Right ventricle myocardium inferior (tissue), 1 donor: ENCODE measurements at regions of chr4 and their contacts with region 1.

Region 1: GRCh38 chr4:85452058-85452731 is 22.8 kb upstream of the ARHGAP24 start:
- DNase-seq: no peak
- ATAC-seq: no peak

Region 2: DNA sequence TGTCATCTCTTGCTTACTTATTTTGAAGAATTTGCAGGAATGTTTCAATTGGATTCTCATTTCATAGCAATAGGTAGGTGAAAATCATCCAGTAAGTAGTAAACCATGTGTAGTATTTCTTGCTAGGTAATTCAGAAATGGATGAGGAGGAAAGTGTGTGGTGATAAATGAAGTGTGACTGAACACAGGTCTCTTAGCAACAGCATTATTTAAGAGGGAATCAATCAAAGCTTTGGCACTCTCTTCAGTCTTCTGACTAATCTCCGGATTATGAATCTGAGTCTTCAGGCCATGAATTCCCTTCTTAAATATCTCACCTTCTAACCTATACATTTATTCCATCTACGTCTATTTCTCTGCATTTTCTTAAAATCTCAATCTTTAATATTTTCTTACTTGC is 33.1 kb before region 1 on chr4:
- intact Hi-C with region 1: loop called (anchors 5 kb)
- DNase-seq: no peak
- ATAC-seq: no peak